Activated B cell treated with CpG ODN at 0.5 μM for 24 hours (primary cell): ENCODE measurements at regions of chr10 and their contacts with region 1.

Region 1: GRCh38 chr10:63268798-63269503 is 135.8 kb downstream of the NRBF2 start:
- DNase-seq: peak; percentile 52
- ATAC-seq: peak; percentile 89
- H3K4me3 Mint-ChIP-seq: peak overlapping the region; percentile 99
- H3K27ac Mint-ChIP-seq: peak overlapping the region; percentile 98
- H3K4me1 Mint-ChIP-seq: peaks cover 35% of the 10 kb centered on the region
- H3K27me3 Mint-ChIP-seq: no peaks in the 10 kb centered on the region
- CTCF ChIP-seq: no peak

Region 2: GRCh38 chr10:62632071-62632809 is 636.7 kb before region 1 on chr10:
- CTCF ChIA-PET with region 1: no interaction called
- POLR2A ChIA-PET with region 1: no interaction called
- intact Hi-C with region 1: loop called (anchors 5 kb)
- DNase-seq: no peak
- ATAC-seq: peak; percentile 81
- H3K4me3 Mint-ChIP-seq: peak overlapping the region; percentile 83
- H3K27ac Mint-ChIP-seq: peak overlapping the region; percentile 98
- H3K4me1 Mint-ChIP-seq: peaks cover 58% of the 10 kb centered on the region
- H3K27me3 Mint-ChIP-seq: no peaks in the 10 kb centered on the region
- CTCF ChIP-seq: no peak

Region 3: DNA sequence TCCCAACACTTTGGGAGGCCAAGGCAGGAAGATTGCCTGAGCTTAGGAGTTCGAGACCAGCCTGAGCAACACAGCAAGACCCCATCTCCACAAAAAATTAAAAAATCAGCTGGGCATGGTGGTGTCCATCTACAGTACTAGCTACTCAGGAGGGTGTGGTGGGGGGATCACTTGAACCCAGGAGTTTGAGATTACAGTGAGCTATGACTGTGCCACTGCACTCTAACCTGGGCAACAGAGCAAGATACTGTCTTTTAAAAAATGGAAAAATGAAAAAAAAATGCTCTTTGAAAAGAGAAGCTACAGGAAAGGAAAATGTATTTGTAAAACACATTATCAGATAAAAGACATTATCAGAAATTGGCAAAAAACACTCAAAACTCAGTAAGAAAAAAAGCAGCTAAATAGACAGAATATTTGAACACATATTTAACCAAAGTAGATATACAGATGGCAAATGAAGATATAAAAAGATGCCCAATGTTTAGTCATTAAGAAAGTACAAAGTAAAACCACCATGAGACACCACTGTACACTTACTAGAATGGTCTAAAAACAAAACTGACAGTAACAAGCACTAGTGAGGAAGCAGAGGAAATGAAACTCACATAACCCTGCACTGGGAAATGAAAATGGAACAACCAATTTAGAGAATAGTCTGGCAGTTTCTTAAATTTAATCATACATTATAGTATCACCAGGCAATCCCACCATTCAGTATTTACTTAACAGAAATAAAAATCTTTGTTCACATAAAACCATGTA is 95.3 kb before region 1 on chr10:
- CTCF ChIA-PET with region 1: no interaction called
- POLR2A ChIA-PET with region 1: interaction called, 6 read pairs
- intact Hi-C with region 1: loop called (anchors 2 kb)
- DNase-seq: no peak
- ATAC-seq: peak; percentile 99
- H3K4me3 Mint-ChIP-seq: peak overlapping the region; percentile 63
- H3K27ac Mint-ChIP-seq: peak overlapping the region; percentile 82
- H3K4me1 Mint-ChIP-seq: peaks cover 48% of the 10 kb centered on the region
- H3K27me3 Mint-ChIP-seq: no peaks in the 10 kb centered on the region
- CTCF ChIP-seq: no peak

Region 4: GRCh38 chr10:63236113-63236935 is 32.6 kb before region 1 on chr10:
- CTCF ChIA-PET with region 1: interaction called, 6 read pairs
- POLR2A ChIA-PET with region 1: interaction called, 28 read pairs
- intact Hi-C with region 1: loop called (anchors 1 kb)
- DNase-seq: no peak
- ATAC-seq: peak; percentile 88
- H3K4me3 Mint-ChIP-seq: no peak overlapping the region
- H3K27ac Mint-ChIP-seq: peak overlapping the region; percentile 69
- H3K4me1 Mint-ChIP-seq: peaks cover 74% of the 10 kb centered on the region
- H3K27me3 Mint-ChIP-seq: no peaks in the 10 kb centered on the region
- CTCF ChIP-seq: no peak

Region 5: DNA sequence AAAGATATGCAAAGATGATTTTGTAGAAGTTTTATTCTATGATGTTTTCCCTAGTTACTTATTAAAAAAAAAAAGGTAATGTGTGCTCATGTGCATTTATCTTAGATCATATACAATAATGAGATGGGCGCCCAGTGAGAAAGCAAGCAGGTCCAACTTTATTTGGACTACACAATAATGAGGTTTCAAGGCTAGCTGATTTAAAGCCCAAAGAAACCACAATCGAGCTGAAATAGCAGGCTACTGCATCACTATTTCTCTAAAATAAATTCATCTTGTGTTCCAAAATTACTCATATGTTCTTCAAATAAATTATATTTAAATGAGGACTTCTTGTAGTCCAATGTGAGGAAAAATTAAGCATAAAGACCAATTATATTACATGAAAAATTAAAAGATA is 86.7 kb after region 1 on chr10:
- CTCF ChIA-PET with region 1: no interaction called
- POLR2A ChIA-PET with region 1: interaction called, 3 read pairs
- intact Hi-C with region 1: loop called (anchors 1 kb)
- DNase-seq: no peak
- ATAC-seq: no peak
- H3K4me3 Mint-ChIP-seq: no peak overlapping the region
- H3K27ac Mint-ChIP-seq: peak overlapping the region; percentile 32
- H3K4me1 Mint-ChIP-seq: peaks cover 22% of the 10 kb centered on the region
- H3K27me3 Mint-ChIP-seq: no peaks in the 10 kb centered on the region
- CTCF ChIP-seq: no peak

Region 6: DNA sequence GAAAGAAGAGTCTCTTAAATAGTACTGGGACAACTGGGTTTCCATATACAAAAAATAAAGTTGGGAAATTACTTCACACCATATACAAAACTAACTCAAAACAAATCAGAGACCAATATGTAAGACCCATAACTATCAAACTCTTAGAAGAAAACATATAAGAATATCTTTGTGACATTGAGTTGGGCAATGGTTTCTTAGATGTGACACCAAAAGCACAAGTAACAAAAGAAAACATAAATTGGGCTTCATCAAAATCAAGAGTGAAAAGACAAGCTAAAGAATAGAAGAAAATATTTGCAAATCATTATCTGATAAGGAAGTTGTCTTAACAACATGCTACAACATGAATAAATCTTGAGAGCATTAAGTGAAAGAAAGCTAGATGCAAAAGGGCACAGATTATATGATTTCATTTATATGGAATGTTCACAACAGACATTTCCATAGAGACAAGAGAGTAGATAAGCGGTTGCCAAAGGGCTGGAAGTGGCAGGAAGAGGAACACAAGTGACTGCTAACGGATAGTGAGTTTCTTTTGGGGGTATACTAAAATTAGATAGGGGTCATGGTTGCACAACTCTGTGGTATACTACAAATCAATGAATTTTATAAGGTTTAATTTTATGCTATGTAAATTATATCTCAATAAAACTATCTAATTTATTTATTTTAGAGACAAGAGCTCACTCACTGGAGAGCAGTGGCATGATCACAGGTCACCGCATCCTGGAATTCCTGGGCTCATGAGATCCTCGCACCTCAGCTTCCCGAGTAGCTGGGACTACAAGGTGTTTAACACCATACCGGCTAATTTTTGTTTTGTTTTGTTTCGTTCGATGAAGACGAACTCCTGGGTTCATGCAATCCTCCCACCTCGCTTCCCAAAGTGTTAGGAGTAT is 161.4 kb after region 1 on chr10:
- CTCF ChIA-PET with region 1: no interaction called
- POLR2A ChIA-PET with region 1: no interaction called
- intact Hi-C with region 1: no loop called
- DNase-seq: no peak
- ATAC-seq: no peak
- H3K4me3 Mint-ChIP-seq: no peak overlapping the region
- H3K27ac Mint-ChIP-seq: no peak overlapping the region
- H3K4me1 Mint-ChIP-seq: peaks cover 29% of the 10 kb centered on the region
- H3K27me3 Mint-ChIP-seq: no peaks in the 10 kb centered on the region
- CTCF ChIP-seq: no peak

Region 7: DNA sequence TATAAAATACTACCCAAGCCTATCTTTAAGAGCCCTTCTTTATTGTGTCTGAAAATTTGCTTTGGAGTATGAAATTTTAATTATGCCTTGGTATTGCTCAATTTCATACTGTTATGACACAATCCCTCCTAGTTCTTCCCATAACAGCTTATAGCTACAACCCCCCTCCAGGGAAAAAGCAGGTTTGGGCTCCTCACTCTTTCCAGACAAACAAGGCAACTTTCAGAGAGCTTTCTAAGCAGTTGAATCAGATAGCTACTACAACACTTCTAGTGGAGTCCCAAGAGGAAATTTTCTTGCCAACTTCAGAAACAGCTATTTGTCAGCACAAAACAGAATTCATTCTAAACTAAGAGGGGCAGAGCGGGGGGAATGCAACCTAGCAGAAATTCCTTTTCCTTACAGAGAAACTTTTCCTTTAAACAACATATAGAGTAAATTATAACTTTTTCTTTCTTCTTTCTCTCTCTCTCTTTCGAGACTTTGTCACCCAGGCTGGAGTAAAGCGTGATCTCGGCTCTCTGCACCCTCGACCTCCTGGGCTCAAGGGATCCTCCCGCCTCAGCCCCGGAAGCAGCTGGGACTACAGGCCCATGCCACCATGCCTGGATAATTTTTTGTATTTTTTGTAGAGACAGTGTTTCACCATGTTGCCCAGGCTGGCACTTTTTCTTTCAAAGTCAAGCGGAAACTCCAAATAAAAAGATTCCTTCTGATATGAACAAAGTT is 222.8 kb after region 1 on chr10:
- CTCF ChIA-PET with region 1: no interaction called
- POLR2A ChIA-PET with region 1: interaction called, 18 read pairs
- intact Hi-C with region 1: no loop called
- DNase-seq: no peak
- ATAC-seq: no peak
- H3K4me3 Mint-ChIP-seq: no peak overlapping the region
- H3K27ac Mint-ChIP-seq: no peak overlapping the region
- H3K4me1 Mint-ChIP-seq: peaks cover 9% of the 10 kb centered on the region
- H3K27me3 Mint-ChIP-seq: no peaks in the 10 kb centered on the region
- CTCF ChIP-seq: no peak